Body of pancreas (tissue), 4 donors: ENCODE measurements at regions of chr17 and their contacts with region 1.

Region 1: GRCh38 chr17:38349097-38349730 is 2.4 kb upstream of the SOCS7 start:
- DNase-seq: peak; percentile 88 to 91 (median 90)
- ATAC-seq: peak; percentile 51
- H3K4me3 ChIP-seq: no peak overlapping the region
- H3K27ac ChIP-seq: peak overlapping the region in 3 of 4 donors; percentile 3 to 16 (median 9)
- H3K4me1 ChIP-seq: peaks cover 11% of the 10 kb centered on the region
- H3K27me3 ChIP-seq: no peaks in the 10 kb centered on the region
- CTCF ChIP-seq: peak; percentile 67 to 92 (median 88)
- POLR2A ChIP-seq: no peak

Region 2: DNA sequence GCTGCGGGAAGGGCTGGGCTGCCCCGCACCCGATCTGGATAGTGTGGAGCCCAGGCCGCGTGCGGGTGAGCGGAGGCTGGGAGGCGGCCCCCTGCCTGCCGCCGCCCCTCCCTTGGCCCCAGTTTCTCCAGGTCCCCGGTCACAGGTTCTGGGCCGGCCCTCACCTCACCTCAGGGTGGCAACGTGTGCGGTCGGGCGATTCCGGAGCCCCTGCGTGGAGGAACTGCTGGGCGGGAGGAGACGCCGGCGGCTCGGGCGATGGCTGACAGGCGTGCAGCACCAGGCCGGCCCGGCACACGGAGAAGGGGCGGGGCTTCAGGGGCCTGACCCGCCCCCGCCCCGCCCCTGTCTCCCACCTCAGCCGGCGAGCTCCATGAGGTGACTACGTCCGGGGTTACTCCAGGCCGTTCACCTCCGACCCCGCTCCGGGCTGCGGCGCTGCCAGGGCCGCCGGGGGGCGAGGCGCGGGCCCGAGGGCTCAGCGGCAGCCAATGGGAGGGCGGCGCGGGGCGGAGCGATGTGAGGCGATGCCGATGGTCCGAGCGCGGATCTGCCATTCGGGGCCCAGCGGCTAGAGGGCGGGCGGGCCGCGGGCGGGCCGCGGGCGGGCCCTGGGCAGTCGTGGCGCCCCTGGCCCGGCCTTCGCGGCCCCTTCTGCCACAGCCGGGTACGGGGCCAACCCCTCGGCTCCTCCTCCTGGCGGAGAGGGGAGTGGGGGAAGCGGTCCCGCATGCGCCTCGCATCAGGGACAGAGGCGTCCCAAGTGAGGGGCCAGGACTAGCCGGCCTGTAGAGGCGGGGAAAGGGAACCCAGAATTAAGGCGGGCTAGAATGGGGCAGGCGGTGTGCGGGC is 990.2 kb before region 1 on chr17:
- intact Hi-C with region 1: no loop called
- DNase-seq: peak; percentile 95 to 98 (median 96)
- ATAC-seq: peak; percentile 95
- H3K4me3 ChIP-seq: peak overlapping the region; percentile 85 to 93
- H3K27ac ChIP-seq: peak overlapping the region; percentile 71 to 88 (median 85)
- H3K4me1 ChIP-seq: peaks cover 36% of the 10 kb centered on the region
- H3K27me3 ChIP-seq: no peaks in the 10 kb centered on the region
- CTCF ChIP-seq: peak in 6 of 7 experiments; percentile 13 to 60 (median 25)
- POLR2A ChIP-seq: peak; percentile 52 to 62 (median 60)

Region 3: GRCh38 chr17:38415250-38416194 is 66.3 kb after region 1 on chr17:
- intact Hi-C with region 1: loop called (anchors 5 kb)
- DNase-seq: no peak
- ATAC-seq: no peak
- H3K4me3 ChIP-seq: no peak overlapping the region
- H3K27ac ChIP-seq: no peak overlapping the region
- H3K4me1 ChIP-seq: peaks cover 18% of the 10 kb centered on the region
- H3K27me3 ChIP-seq: peaks cover 0 to 7% of the 10 kb centered on the region in 2 donors
- CTCF ChIP-seq: no peak
- POLR2A ChIP-seq: no peak